Caco-2 (cell line): ENCODE measurements at regions of chr11 and their contacts with region 1.

Region 1: DNA sequence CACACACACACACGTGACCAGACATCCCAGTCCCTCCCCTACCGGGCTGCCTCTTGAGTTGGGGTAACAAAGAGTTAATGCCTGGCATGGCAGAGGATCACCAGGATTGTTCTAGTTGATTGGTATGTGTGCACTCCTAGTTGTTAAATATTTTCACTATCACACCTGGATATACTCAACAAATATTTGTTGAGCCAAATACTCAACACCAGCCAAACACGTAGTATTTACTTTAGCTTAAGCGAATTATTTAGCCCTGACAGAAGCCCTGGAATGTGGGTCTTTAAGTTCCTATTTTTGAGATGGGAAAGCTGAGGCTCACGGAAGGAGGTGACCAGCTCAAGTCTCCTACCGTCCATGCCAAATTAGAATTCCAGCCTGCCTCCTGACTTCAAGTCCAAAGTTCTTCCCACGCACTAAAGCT is 10.5 kb downstream of the CD3E start:
- DNase-seq: peak; percentile 87 to 93
- H3K4me3 ChIP-seq: peak overlapping the region; percentile 26
- H3K4me3 Mint-ChIP-seq: peak overlapping the region; percentile 68
- H3K27ac Mint-ChIP-seq: peak overlapping the region; percentile 93
- H3K4me1 ChIP-seq: peaks cover 80% of the 10 kb centered on the region
- H3K4me1 Mint-ChIP-seq: peaks cover 65% of the 10 kb centered on the region
- H3K27me3 ChIP-seq: no peaks in the 10 kb centered on the region
- H3K27me3 Mint-ChIP-seq: no peaks in the 10 kb centered on the region
- CTCF ChIP-seq: no peak

Region 2: DNA sequence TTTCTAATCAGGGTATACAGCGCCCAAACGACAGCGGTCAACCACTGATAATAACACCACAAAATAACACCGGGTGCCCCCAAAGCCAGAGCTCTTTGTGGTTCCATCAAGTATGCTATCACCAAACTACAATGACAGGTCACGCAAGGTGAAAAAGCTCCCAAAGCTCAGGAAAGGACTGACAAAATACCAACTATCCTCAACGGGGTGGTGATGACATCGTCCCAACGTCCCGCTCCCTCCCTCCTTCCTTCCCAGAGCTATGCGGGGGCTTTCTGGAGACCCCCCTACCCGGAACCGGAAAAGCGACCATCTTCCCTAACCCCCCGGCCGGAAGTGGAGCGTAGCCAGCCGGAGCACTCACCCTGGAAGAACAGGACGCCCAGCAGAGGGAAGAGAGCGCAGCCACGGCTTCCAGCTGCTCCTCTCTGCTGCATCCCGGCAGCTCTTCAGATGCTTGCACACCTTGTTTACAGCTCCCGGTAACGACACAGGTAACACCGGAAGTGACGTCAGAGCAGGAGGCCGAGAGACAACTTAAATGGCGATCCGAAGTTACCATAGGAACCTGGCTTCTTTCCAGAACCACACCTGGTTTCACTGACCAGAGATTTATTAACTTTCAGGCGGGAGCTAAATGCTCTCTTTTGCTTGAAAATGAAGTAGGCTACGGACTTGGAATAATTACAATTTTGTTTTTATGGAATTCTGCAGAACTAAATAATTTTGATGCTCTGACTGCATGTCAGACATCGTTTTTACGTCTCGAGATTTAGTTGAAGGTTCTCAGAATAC is 62.9 kb before region 1 on chr11 and contains the start of gene MPZL3:
- CTCF ChIA-PET with region 1: interaction called, 3 read pairs
- POLR2A ChIA-PET with region 1: interaction called, 4 read pairs
- intact Hi-C with region 1: loop called (anchors 2 kb)
- DNase-seq: peak; percentile 97 to 99
- H3K4me3 ChIP-seq: peak within 1 kb of the TSS; percentile 65
- H3K4me3 Mint-ChIP-seq: peak within 1 kb of the TSS; percentile 85
- H3K27ac Mint-ChIP-seq: peak within 1 kb of the TSS; percentile 98
- H3K4me1 ChIP-seq: peaks cover 11% of the 10 kb centered on the region
- H3K4me1 Mint-ChIP-seq: peaks cover 24% of the 10 kb centered on the region
- H3K27me3 ChIP-seq: no peaks in the 10 kb centered on the region
- H3K27me3 Mint-ChIP-seq: no peaks in the 10 kb centered on the region
- CTCF ChIP-seq: peak in 1 of 2 experiments; percentile 20
- total RNA-seq, gene MPZL3: 29.6 and 31.8 TPM in 2 replicates

Region 3: GRCh38 chr11:118295834-118296454 is 19.1 kb before region 1 on chr11:
- CTCF ChIA-PET with region 1: interaction called, 6 read pairs
- POLR2A ChIA-PET with region 1: no interaction called
- intact Hi-C with region 1: loop called (anchors 1 kb)
- DNase-seq: peak; percentile 63 to 69
- H3K4me3 ChIP-seq: no peak overlapping the region
- H3K4me3 Mint-ChIP-seq: no peak overlapping the region
- H3K27ac Mint-ChIP-seq: peak overlapping the region; percentile 14
- H3K4me1 ChIP-seq: peaks cover 9% of the 10 kb centered on the region
- H3K4me1 Mint-ChIP-seq: peaks cover 18% of the 10 kb centered on the region
- H3K27me3 ChIP-seq: no peaks in the 10 kb centered on the region
- H3K27me3 Mint-ChIP-seq: no peaks in the 10 kb centered on the region
- CTCF ChIP-seq: peak; percentile 73 to 86

Region 4: GRCh38 chr11:118435893-118436624 is 121.1 kb after region 1 on chr11 and contains the start of gene KMT2A:
- CTCF ChIA-PET with region 1: no interaction called
- POLR2A ChIA-PET with region 1: interaction called, 3 read pairs
- intact Hi-C with region 1: loop called (anchors 1 kb)
- DNase-seq: peak; percentile 100
- H3K4me3 ChIP-seq: peak within 1 kb of the TSS; percentile 97
- H3K4me3 Mint-ChIP-seq: peak within 1 kb of the TSS; percentile 82
- H3K27ac Mint-ChIP-seq: peak within 1 kb of the TSS; percentile 88
- H3K4me1 ChIP-seq: peaks cover 24% of the 10 kb centered on the region
- H3K4me1 Mint-ChIP-seq: peaks cover 27% of the 10 kb centered on the region
- H3K27me3 ChIP-seq: no peaks in the 10 kb centered on the region
- H3K27me3 Mint-ChIP-seq: no peaks in the 10 kb centered on the region
- CTCF ChIP-seq: peak in 1 of 2 experiments; percentile 15
- total RNA-seq, gene KMT2A: 93.9 and 107 TPM in 2 replicates